ENCODE measurements at regions of chr11 and their contacts with region 1.

Region 1: DNA sequence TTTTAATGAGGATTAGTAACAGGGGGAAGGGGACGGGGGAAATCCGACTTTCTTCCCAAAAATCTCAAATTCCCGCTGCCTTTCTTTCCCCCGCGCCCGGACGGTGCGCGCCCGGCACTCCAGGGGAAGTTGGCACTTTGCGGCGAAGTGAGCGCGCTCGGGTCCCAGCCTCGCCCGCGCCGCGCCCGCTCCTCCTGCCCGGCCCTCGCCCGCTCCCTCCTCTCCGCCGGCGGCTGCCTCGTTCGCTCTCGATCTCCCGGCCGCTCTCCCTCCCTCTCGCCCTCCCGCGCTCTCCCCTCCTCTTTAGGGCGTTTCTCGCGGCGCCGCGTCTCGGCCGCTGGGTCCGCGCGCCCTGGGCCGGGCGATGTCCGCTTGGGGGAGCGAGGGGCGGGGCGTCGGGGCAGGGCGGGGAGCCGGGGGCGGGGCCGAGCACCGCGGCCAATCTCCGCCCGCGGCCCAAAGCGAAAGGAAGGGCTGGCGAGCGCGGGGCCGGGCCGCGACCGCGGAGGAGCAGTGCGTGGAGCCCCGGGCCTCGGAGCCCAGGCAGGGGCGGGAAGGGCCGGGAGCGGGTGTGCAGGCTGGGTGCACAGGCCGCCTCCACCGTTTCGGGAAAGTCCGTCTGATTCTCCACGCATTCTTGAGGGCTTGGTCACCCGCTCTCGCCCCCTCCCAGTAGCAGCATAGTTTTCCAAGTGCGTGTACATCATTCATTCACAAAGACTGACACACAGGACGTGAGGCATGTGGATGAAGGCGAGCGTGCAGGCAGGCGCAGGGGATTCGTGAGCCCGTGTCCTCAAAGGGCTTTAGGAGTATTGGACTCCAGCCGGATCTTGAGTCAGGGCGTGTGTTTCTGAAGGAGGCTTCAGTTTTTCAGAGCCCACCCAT is 65.1 kb downstream of the ETS1 start:
- DNase-seq: peak; percentile 97
- H3K4me3 ChIP-seq: peak overlapping the region; percentile 89 to 91
- H3K27ac ChIP-seq: peak overlapping the region; percentile 90 to 97
- H3K4me1 ChIP-seq: peaks cover 24 to 46% of the 10 kb centered on the region in 2 experiments
- H3K27me3 ChIP-seq: no peaks in the 10 kb centered on the region
- CTCF ChIP-seq: no peak
- EP300 ChIP-seq: peak in 1 of 2 experiments; percentile 92; a peak in 2 of 4 replicates
- RAD21 ChIP-seq: peak; percentile 24

Region 2: GRCh38 chr11:128506999-128507611 is 15.2 kb before region 1 on chr11:
- CTCF ChIA-PET with region 1: interaction called, 24 read pairs
- POLR2A ChIA-PET with region 1: no interaction called
- DNase-seq: peak; percentile 53
- H3K4me3 ChIP-seq: peak overlapping the region; percentile 35 to 46
- H3K27ac ChIP-seq: peak overlapping the region; percentile 90 to 100
- H3K4me1 ChIP-seq: peaks cover 57 to 62% of the 10 kb centered on the region in 2 experiments
- H3K27me3 ChIP-seq: no peaks in the 10 kb centered on the region
- CTCF ChIP-seq: no peak
- EP300 ChIP-seq: peak in 1 of 2 experiments; percentile 69; a peak in 1 of 4 replicates
- RAD21 ChIP-seq: no peak

Region 3: DNA sequence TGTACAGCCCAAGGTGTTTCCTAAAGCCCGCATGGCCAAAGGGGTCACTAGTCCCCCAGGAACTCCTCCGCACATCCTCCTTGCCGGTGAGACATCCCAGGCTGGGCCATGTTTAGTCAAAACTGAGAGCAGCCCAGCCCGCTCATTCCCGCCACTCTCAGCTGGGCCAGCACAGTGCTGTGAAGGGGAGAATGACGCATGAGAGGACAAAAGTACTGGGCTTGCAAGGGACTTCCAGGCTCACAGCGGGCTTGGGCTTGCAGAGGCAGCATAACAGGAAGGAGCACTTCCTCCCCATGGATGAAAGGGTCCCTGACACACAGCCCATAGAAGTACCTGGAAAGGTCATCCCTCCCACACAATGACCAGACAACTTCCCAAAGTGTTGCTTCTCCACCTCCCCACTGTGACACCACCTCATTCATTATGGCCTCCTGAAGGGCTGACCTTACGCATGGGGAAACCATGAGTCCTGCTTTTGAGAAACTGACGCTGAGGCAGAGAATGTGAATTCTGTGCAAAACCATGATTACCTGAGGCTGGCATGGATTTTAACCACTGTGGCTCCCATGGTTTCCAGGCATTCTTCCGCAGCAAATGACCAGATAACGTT is 46.0 kb after region 1 on chr11:
- CTCF ChIA-PET with region 1: no interaction called
- POLR2A ChIA-PET with region 1: no interaction called
- DNase-seq: no peak
- H3K4me3 ChIP-seq: no peak overlapping the region
- H3K27ac ChIP-seq: no peak overlapping the region
- H3K4me1 ChIP-seq: no peaks in the 10 kb centered on the region
- H3K27me3 ChIP-seq: no peaks in the 10 kb centered on the region
- CTCF ChIP-seq: no peak
- EP300 ChIP-seq: no peak
- RAD21 ChIP-seq: no peak

Region 4: DNA sequence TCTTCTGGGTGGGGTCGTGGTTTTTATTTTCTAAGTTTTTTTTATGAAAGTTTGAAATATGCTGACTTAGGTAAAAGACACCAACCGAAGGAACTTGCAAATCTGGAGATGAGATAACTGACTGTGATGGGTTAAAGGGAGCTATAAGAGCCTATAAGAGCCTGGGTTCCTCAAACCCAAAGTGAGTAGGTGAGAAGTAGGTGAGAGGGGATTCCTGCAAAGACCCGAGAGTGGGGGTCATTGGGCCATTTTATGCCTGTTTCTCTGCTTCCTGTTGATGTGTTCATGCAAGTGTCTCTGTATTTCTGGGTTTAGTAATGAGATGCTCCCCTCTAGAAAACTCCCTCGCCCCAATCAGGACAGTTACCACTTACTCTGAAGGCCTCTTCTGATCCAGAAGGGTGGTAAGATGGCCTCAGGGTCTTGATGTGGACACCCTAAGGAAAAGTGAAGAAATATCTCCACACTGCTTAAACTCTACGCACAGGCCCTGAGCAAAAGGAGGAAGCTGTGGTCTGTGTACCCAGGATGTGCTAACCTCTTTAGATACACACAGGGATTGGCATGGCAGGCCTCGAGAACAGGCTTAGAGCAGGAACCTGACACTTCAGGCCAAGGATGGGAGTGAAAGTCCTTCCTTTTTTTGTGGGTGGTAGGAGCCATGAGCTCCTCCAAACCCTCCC is 173.4 kb after region 1 on chr11:
- CTCF ChIA-PET with region 1: no interaction called
- POLR2A ChIA-PET with region 1: no interaction called
- DNase-seq: no peak
- H3K4me3 ChIP-seq: peak overlapping the region; percentile 60 to 98; a peak in 3 of 4 replicates
- H3K27ac ChIP-seq: peak overlapping the region in 1 of 2 experiments; percentile 97; a peak in 1 of 4 replicates
- H3K4me1 ChIP-seq: peaks cover 10 to 15% of the 10 kb centered on the region in 2 experiments; a peak in 1 of 4 replicates
- H3K27me3 ChIP-seq: no peaks in the 10 kb centered on the region
- CTCF ChIP-seq: no peak
- EP300 ChIP-seq: no peak
- RAD21 ChIP-seq: no peak

Measured in SK-N-SH (cell line).